ENCODE measurements at regions of chr11 and their contacts with region 1.

Region 1: DNA sequence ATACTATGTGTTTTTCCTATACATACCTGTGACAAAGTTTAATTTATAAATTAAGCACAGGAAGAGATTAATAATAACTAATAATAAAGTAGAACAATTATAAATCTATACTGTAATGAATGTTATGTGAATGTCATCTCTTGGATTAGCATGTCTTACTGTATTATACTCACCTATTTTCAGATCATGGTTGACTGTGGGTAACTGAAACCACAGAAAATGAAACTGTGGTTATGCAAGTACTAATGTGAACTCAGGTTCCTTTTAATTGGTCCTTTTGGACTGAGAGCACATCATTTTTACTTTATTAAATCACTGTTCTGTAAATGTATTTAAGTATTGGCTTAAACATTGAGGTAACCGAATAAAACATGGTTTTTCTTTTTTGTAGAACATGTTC is 108.8 kb downstream of the PPP6R3 start:
- DNase-seq: no peak
- H3K4me3 ChIP-seq: no peak overlapping the region
- H3K27ac ChIP-seq: no peak overlapping the region
- H3K4me1 ChIP-seq: no peaks in the 10 kb centered on the region; a peak in 2 of 4 replicates
- H3K27me3 ChIP-seq: no peaks in the 10 kb centered on the region
- CTCF ChIP-seq: no peak
- EP300 ChIP-seq: no peak
- RAD21 ChIP-seq: no peak

Region 2: DNA sequence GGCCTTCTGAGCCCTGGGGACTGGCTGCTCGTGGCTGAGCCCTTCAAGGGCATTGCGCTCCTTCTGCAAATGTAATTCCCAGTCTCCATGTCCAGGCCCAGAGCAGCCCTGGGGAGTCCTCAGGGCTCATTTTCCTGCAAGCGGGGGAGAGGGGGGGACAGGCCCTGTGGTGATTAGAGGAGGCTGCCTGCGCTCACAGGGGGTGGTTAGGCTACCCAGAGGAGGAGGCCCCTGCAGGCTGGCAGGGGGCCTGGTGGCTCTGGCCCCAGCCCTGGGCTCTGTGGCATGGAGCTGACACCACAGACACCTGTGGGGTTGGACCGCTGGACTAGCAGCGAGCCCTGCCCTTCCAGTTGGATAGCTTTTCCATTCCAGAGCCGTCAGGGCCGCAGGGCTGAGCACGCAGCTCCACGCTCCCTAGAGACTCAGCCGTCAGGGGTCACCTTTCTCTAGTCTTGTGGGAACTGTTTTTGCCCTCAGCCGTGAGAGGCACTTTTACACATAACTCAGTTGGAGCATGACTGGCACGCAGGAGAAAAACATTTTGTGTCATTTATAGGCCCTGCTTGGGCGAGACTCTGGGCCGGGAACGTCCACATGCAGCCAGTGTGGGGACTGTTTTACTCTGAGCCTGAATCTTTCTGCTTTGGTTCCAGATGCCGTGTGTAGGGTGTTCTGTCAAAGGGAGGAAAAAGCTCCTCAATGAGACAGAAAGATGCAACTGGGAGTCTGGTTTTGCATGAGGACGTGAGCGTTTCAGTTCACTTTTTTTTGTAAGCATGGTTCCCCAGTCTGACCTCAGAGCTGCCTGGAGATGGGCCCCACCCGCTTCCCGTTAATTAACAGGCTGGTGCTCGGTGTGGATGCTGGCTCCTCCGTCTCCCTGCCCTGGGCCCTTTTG is 198.9 kb before region 1 on chr11:
- CTCF ChIA-PET with region 1: no interaction called
- POLR2A ChIA-PET with region 1: no interaction called
- DNase-seq: peak; percentile 69
- H3K4me3 ChIP-seq: no peak overlapping the region
- H3K27ac ChIP-seq: peak overlapping the region in 1 of 2 experiments; percentile 100; a peak in 2 of 4 replicates
- H3K4me1 ChIP-seq: peaks cover 23 to 62% of the 10 kb centered on the region in 2 experiments
- H3K27me3 ChIP-seq: no peaks in the 10 kb centered on the region
- CTCF ChIP-seq: no peak
- EP300 ChIP-seq: no peak
- RAD21 ChIP-seq: no peak; the same call in 1 of the 2 replicates

Region 3: DNA sequence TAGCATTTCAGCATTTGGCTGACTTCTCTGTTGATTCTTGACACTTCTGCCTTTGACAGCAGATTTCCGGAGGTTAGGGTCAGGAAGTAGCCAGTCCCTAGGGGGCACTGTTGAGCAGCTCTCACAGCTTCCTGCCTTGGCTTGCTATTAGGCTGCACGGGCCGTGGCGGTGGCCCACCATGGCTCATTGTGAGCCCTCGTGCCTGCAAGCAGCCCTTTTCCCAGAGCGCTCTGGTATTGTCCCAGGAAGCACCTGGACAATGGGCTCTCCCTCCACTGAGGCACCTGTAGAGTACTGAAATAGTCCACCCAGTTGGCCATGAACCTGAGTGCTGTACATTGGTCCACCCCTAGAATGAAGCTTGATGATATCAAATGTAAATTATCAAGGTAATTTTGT is 14.7 kb after region 1 on chr11:
- CTCF ChIA-PET with region 1: interaction called, 15 read pairs
- POLR2A ChIA-PET with region 1: interaction called, 3 read pairs
- DNase-seq: peak; percentile 55
- H3K4me3 ChIP-seq: no peak overlapping the region
- H3K27ac ChIP-seq: no peak overlapping the region
- H3K4me1 ChIP-seq: peaks cover 2 to 14% of the 10 kb centered on the region in 2 experiments; a peak in 2 of 4 replicates
- H3K27me3 ChIP-seq: no peaks in the 10 kb centered on the region
- CTCF ChIP-seq: peak; percentile 67
- EP300 ChIP-seq: no peak
- RAD21 ChIP-seq: peak; percentile 57

Region 4: GRCh38 chr11:68806921-68807844 is 237.8 kb after region 1 on chr11:
- CTCF ChIA-PET with region 1: no interaction called
- POLR2A ChIA-PET with region 1: no interaction called
- DNase-seq: no peak
- H3K4me3 ChIP-seq: no peak overlapping the region
- H3K27ac ChIP-seq: peak overlapping the region in 1 of 2 experiments; percentile 52; a peak in 2 of 4 replicates
- H3K4me1 ChIP-seq: peaks cover 4 to 6% of the 10 kb centered on the region in 2 experiments; a peak in 2 of 4 replicates
- H3K27me3 ChIP-seq: no peaks in the 10 kb centered on the region
- CTCF ChIP-seq: no peak
- EP300 ChIP-seq: no peak
- RAD21 ChIP-seq: no peak

Measured in SK-N-SH (cell line).